PC-3 (cell line): ENCODE measurements at regions of chr1 and their contacts with region 1.

Region 1: GRCh38 chr1:56644919-56645676 is at the start of gene PRKAA2:
- DNase-seq: peak; percentile 52
- ATAC-seq: peak; percentile 69
- H3K4me3 ChIP-seq: peak within 1 kb of the TSS; percentile 82
- H3K27ac ChIP-seq: peak within 1 kb of the TSS; percentile 32
- H3K4me1 ChIP-seq: peaks cover 13% of the 10 kb centered on the region
- H3K27me3 ChIP-seq: no peaks in the 10 kb centered on the region
- CTCF ChIP-seq: no peak
- total RNA-seq, gene PRKAA2: 3.4 and 4.5 TPM in 2 replicates

Region 2: DNA sequence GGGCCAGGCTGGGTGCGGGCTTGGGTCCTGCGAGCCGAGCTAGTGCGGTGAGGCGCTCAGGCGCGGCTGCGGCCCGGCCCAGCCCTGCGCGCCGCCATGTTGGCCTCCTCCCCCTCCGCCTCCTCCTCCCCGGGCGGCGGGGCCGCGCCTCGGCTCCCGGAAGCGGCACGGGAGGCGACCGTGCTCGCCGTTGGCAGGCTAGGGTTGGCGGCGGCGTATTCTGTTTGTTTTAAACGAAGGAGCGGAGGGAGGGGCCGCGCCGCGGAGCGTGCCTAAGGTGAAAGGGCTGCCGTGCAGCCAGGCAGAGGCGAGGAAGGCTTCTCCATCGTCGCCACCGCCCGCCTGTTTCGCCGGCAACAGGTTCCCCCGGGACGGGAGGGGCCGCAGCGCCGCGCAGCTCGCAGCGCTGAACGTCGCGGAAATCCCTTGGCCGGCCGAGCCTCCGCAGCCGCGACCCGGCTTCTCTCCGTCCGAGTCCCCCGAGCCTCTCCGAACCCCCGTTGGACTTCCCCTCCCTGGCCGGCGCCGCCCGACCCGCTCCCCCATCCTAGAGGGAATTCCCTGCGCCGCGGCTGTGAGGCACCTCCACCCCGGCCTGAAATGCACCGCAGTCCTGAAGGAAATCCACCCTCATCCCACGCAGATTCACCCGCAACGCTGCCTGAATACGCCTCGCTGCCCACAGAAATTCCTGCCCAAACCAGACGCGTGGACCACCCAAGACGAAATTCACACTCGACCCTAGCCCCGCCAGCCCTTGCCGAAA is 1429.7 kb before region 1 on chr1 and contains the start of gene USP24:
- CTCF ChIA-PET with region 1: no interaction called
- POLR2A ChIA-PET with region 1: no interaction called
- intact Hi-C with region 1: loop called (anchors 10 kb)
- DNase-seq: peak; percentile 81
- ATAC-seq: peak; percentile 69
- H3K4me3 ChIP-seq: peak within 1 kb of the TSS; percentile 95
- H3K27ac ChIP-seq: peak within 1 kb of the TSS; percentile 60
- H3K4me1 ChIP-seq: peaks cover 42% of the 10 kb centered on the region
- H3K27me3 ChIP-seq: no peaks in the 10 kb centered on the region
- CTCF ChIP-seq: no peak
- total RNA-seq, gene USP24: 29.1 and 38.5 TPM in 2 replicates

Region 3: GRCh38 chr1:56688506-56689026 is 43.5 kb after region 1 on chr1:
- CTCF ChIA-PET with region 1: no interaction called
- POLR2A ChIA-PET with region 1: no interaction called
- intact Hi-C with region 1: loop called (anchors 5 kb)
- DNase-seq: peak; percentile 97
- ATAC-seq: peak; percentile 98
- H3K4me3 ChIP-seq: peak overlapping the region; percentile 3; the same call in 1 of the 2 replicates
- H3K27ac ChIP-seq: peak overlapping the region; percentile 78
- H3K4me1 ChIP-seq: peaks cover 33% of the 10 kb centered on the region
- H3K27me3 ChIP-seq: no peaks in the 10 kb centered on the region
- CTCF ChIP-seq: no peak

Region 4: DNA sequence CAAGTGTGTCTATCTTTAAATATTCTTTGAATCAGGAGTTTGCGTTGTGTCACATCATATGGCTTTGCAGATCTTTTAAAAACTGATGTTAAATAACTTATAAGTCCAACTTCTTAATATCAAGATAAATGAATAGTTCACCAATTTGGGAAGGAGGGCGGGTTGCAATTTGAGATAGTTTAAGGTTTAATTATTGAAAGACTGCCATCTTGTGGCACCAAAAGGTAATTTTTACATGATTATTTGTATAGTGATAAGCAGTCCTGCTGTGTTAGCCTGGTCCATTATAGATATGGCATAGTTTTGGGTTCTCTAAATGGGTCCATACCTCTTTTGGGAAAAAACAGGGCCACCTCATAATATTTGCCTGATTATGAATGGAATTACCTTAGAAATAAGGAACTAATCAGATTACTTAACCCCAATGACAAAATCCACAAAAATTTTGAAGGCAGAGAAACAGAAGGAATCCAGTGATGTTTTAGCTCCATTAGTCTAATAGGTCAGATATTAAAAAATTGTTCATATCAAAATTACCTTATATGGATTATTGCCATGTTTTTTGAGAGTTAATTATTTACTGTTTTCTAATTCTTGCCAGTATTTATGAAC is 64.3 kb after region 1 on chr1:
- CTCF ChIA-PET with region 1: no interaction called
- POLR2A ChIA-PET with region 1: no interaction called
- intact Hi-C with region 1: loop called (anchors 2 kb)
- DNase-seq: peak; percentile 87
- ATAC-seq: peak; percentile 70
- H3K4me3 ChIP-seq: no peak overlapping the region
- H3K27ac ChIP-seq: no peak overlapping the region
- H3K4me1 ChIP-seq: peaks cover 15% of the 10 kb centered on the region
- H3K27me3 ChIP-seq: no peaks in the 10 kb centered on the region
- CTCF ChIP-seq: peak; percentile 77